Heart right ventricle (tissue), 16 donors: ENCODE measurements at regions of chr11 and their contacts with region 1.

Region 1: DNA sequence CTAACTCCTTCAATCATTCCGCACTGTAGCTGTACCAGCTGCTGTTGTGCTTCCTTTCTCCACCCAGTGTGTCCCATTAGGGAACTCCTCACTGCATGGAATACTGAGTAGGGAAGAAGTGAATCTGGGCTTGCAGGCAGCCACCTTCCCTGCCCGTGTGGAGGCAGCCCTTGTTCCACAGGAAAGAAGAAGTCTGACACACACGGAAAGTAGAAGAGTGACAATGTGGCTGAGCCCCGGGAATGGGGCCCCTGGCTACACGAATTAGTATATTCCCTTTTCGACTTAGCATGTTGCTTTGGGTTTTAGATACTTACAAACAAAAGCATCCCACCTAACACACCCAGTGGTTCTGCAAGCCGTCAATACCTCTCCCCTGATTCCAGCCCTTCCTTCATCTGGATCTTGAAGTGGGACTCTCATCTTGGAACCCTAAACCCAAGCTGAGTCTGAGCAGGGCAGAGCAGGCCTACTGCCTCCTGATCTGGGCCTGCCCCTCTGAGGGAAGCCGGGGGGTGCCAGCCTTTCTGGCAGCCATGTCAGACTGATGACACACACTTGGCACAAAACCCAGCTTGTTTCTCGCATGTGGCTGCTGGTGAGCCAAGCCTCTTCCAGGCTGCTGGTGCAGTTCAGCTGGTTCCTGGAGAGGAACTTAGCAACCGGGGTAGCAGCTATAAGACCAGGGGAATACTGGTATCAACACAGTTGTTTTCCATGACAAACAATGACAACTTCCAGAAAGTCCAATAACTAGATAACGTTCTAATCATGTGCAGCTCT is 71.6 kb downstream of the C11orf58 start:
- DNase-seq: peak; percentile 64 to 79
- ATAC-seq: peak; percentile 50 to 86 (median 83)
- H3K4me3 ChIP-seq: no peak overlapping the region
- H3K27ac ChIP-seq: peak overlapping the region in 9 of 10 donors; percentile 6 to 81 (median 56)
- H3K4me1 ChIP-seq: peaks cover 4 to 96% (median 62%) of the 10 kb centered on the region in 9 donors
- H3K27me3 ChIP-seq: no peaks in the 10 kb centered on the region
- CTCF ChIP-seq: no peak

Region 2: GRCh38 chr11:16871368-16871767 is 61.3 kb after region 1 on chr11:
- intact Hi-C with region 1: loop called in 1 of 10 experiments (anchors 10 kb)
- DNase-seq: no peak
- ATAC-seq: no peak
- H3K4me3 ChIP-seq: no peak overlapping the region
- H3K27ac ChIP-seq: no peak overlapping the region
- H3K4me1 ChIP-seq: peaks cover 0 to 40% (median 11%) of the 10 kb centered on the region in 9 donors
- H3K27me3 ChIP-seq: no peaks in the 10 kb centered on the region
- CTCF ChIP-seq: no peak

Region 3: DNA sequence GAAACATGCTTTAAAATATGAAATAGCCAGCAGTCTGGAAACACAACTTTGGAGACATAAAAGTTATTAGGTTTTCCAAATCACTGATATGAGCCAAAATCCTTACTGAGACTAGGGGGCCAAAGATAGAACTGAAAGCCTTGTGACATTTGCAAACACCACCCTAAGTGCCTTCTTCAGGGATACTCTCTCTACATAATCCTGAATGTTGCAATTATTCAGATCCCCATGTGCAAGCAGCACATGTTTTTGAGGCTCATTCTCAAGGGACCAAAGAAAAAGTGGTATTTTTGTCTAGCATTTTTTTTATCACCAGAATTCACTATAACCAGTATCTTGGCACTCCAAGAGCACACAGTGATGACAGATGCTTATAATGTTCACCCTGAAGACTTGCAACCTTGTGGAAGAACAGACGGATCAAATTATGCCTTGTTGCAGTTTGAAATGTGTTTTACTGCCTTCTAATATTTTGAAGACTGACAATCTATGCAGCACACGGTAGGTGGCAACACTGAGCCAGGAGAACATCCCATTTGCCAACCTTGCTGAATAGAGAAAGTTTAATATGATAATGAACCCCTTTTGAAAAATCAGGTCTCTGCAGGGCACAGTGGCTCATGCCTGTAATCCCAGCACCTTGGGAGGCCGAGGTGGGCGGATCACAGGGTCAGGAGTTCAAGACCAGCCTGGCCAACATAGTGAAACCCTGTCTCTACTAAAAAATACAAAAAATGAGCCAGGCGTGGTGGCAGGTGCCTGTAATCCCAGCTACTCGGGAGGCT is 125.6 kb after region 1 on chr11:
- intact Hi-C with region 1: loop called in 4 of 10 experiments (anchors 10 kb)
- DNase-seq: no peak
- ATAC-seq: peak in 5 of 8 donors; percentile 20 to 54 (median 48)
- H3K4me3 ChIP-seq: no peak overlapping the region
- H3K27ac ChIP-seq: peak overlapping the region in 9 of 10 donors; percentile 18 to 89 (median 74)
- H3K4me1 ChIP-seq: peaks cover 6 to 50% (median 26%) of the 10 kb centered on the region in 9 donors
- H3K27me3 ChIP-seq: no peaks in the 10 kb centered on the region
- CTCF ChIP-seq: peak; percentile 13 to 74 (median 68)

Region 4: DNA sequence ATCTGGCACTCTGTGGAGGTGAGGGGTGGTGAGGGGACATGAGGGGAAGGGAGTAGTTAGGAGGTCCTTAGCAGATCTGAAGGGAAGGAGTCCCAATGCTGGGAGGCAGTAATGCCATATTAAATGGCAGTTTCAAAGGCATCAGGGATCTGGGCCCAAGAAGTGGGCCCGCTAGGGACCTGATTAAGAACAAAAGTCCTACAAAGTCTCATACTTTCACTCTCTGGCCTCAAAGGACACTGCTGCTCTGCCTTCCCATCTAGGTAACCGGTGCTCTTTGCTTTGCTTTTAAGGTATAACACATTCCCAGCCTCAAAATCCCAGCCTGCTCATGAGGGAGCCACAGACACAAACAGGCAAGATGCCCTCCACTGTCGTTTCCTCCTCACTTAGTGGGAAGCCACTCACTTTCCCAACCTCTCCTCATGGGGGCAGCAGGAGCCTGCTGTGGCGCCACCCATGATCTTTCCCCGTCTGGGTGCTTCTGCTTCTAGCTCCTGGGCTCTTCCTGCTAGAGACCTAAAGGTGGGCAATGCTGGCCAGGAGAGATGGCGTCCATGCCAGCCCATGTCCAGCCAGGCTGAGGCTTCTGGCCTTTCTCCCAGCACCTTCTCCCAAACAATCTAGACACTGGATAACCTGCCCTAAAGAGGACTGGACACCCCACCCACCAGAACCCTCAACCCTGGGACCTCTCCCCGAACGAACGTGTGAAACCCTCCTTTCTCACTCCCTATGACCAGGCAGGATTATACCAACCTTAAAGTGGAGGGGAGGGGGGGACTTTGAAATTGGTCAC is 135.8 kb after region 1 on chr11:
- intact Hi-C with region 1: loop called in 1 of 10 experiments (anchors 10 kb)
- DNase-seq: peak; percentile 32 to 46
- ATAC-seq: peak; percentile 71 to 90 (median 87)
- H3K4me3 ChIP-seq: no peak overlapping the region
- H3K27ac ChIP-seq: no peak overlapping the region
- H3K4me1 ChIP-seq: peaks cover 0 to 8% (median 0%) of the 10 kb centered on the region in 9 donors
- H3K27me3 ChIP-seq: no peaks in the 10 kb centered on the region
- CTCF ChIP-seq: peak; percentile 42 to 81 (median 74)